Activated naive CD4-positive, alpha-beta T cell treated with anti-CD3 and anti-CD28 coated beads for 36 hours (primary cell): ENCODE measurements at regions of chr16 and their contacts with region 1.

Region 1: DNA sequence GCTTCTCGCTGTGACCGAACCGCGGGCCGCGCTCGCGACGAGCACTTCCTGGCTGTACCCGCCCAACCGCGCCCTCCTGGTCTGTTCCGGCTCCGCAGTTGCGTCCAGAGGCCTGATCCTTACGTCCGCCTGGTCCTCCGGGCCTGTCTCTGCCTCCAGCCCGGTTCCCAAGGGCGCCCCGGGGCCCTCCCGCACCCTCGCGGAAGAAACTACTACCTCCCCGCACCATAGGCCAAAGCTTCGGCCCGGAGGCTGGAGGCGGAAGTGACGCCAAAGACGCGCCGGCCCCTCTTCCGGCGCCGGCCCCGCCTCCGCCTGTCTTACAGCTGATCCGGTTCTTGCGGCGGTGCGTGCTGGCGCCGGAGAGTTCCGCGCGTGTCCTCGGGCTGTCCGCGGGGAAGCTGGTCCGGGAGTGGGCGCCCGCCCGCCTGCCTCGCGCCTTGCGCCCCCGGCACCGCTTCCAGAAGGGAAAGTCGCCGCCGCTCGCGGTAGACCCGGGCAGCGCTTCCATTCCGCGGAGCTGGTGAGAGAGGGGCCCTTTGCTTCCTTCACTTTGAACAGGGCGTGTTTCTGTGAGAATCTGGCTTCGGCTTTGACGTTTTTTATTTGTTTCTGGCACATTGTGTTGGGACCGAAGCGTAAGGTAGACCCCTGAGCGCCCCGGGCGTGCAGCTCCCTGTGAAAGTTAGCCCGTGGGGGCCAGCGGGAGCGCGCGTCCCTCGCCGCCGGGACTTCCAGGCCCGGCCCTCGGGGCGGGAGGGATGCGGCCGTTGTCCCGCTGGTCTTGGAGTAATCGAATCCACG is at the start of gene ZNF778:
- DNase-seq: peak; percentile 83
- H3K4me3 Mint-ChIP-seq: peak within 1 kb of the TSS; percentile 83
- H3K27ac Mint-ChIP-seq: peak within 1 kb of the TSS; percentile 89
- H3K4me1 Mint-ChIP-seq: peaks cover 20% of the 10 kb centered on the region
- H3K27me3 Mint-ChIP-seq: no peaks in the 10 kb centered on the region
- total RNA-seq, gene ZNF778: 3.5 to 3.6 TPM

Region 2: DNA sequence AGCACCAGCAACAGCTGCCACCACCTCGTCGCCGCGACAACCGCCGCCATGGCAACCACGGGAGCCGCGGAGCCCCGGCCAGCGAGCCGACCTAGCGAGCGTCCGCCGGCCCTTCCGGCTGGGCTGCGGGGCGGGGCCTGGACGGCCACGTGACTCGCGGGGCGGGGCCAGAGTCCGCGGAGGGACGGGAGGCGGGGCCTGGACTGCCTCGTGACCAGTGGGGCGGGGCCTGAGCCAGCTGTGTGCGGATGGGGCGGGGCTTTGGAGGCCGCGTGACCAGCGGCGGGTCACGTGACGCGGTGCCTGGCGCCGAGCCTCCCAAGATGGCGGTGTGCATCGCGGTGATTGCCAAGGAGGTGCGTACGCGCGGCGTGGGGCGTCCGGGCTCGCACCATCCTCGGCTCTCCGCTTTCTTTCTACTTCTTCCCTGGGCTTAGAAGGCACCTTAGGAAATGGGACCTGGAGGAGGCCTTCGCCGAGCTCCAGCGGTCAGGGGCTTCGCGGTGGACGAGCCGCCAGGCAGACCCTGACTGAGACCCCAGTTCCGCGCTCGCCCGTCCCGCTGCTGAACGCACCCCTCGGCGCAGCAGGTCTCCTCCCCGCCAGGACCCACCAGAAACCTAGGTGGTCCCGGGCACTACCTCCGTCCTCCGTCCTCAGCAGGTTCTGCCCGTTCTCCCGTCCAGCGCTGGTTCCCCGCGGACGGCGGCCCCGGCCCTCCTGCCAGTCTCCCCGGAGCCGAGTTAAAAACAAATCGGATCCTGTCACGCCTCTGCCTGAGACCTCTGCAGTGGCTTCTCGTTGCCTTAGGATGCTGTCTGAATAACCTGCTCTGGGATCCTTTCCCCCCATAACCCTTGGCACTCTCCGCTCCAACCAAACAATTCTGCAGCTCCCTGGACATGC is 360.5 kb before region 1 on chr16 and contains the starts of genes GALNS and TRAPPC2L:
- CTCF ChIA-PET with region 1: interaction called, 5 read pairs
- intact Hi-C with region 1: loop called (anchors 1 kb)
- DNase-seq: peak; percentile 99
- H3K4me3 Mint-ChIP-seq: peak within 1 kb of the TSS; percentile 88
- H3K27ac Mint-ChIP-seq: peak within 1 kb of the TSS; percentile 63
- H3K4me1 Mint-ChIP-seq: peaks cover 23% of the 10 kb centered on the region
- H3K27me3 Mint-ChIP-seq: no peaks in the 10 kb centered on the region
- total RNA-seq, gene GALNS: 10.9 to 11.2 TPM
- total RNA-seq, gene TRAPPC2L: 57.7 to 66.1 TPM

Region 3: GRCh38 chr16:88869673-88869980 is 348.0 kb before region 1 on chr16:
- CTCF ChIA-PET with region 1: no interaction called
- intact Hi-C with region 1: no loop called
- DNase-seq: no peak
- H3K4me3 Mint-ChIP-seq: no peak overlapping the region
- H3K27ac Mint-ChIP-seq: no peak overlapping the region
- H3K4me1 Mint-ChIP-seq: peaks cover 9% of the 10 kb centered on the region
- H3K27me3 Mint-ChIP-seq: peaks cover 7% of the 10 kb centered on the region

Region 4: GRCh38 chr16:88941913-88942909 is 275.4 kb before region 1 on chr16:
- CTCF ChIA-PET with region 1: interaction called, 4 read pairs
- intact Hi-C with region 1: loop called (anchors 1 kb)
- DNase-seq: peak; percentile 61
- H3K4me3 Mint-ChIP-seq: peak overlapping the region; percentile 38
- H3K27ac Mint-ChIP-seq: no peak overlapping the region
- H3K4me1 Mint-ChIP-seq: peaks cover 2% of the 10 kb centered on the region
- H3K27me3 Mint-ChIP-seq: peaks cover 30% of the 10 kb centered on the region

Region 5: GRCh38 chr16:89099905-89100304 is 117.7 kb before region 1 on chr16:
- CTCF ChIA-PET with region 1: no interaction called
- intact Hi-C with region 1: loop called (anchors 5 kb)
- DNase-seq: no peak
- H3K4me3 Mint-ChIP-seq: no peak overlapping the region
- H3K27ac Mint-ChIP-seq: peak overlapping the region; percentile 44
- H3K4me1 Mint-ChIP-seq: peaks cover 64% of the 10 kb centered on the region
- H3K27me3 Mint-ChIP-seq: no peaks in the 10 kb centered on the region